Sciatic nerve (tissue), 2 donors: ENCODE measurements at regions of chr2 and their contacts with region 1.

Region 1: GRCh38 chr2:60881047-60881932 is at the start of gene REL:
- DNase-seq: peak; percentile 95
- ATAC-seq: peak; percentile 96
- total RNA-seq, gene REL: 28.4 TPM

Region 2: DNA sequence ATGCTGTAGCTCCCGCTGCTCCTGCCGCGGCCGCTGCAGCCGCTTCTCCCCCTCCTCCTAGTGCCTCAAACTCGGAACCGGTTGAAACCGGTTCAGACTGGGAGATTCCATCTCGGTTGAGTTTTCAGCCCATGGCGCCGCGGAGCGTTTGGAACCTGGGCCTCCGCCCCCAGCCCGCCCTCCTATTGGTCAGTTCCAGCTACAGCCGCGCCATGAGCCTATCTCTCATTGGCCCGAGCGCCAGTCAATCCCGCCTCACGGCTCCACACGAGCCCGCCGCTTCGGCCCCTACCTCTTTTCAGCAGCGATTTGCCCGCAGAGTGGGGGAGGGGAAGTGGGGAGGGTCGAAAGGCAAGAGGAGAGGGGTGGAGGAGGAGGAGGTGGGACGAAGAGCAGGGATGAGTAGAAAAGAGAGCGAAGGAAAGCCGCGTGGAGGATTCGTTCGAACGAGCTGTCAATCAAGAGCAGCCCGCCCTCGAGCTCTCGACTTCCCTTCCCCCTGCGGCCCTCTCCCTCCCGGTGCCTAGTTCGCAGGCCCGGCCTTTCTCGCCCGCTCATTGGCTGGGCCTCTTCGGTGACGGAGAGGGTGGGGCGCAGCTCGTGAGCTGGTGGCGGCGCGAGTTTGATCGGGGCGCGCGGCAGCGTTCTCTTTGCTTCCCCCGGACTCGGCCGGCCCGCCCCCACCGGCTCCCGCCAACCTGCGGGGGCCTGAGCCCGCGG is 657.1 kb after region 1 on chr2 and contains the start of gene XPO1:
- intact Hi-C with region 1: loop called (anchors 5 kb)
- DNase-seq: peak; percentile 100
- ATAC-seq: peak; percentile 96
- total RNA-seq, gene XPO1: 131 TPM